ENCODE measurements at regions of chr3 and their contacts with region 1.

Region 1: DNA sequence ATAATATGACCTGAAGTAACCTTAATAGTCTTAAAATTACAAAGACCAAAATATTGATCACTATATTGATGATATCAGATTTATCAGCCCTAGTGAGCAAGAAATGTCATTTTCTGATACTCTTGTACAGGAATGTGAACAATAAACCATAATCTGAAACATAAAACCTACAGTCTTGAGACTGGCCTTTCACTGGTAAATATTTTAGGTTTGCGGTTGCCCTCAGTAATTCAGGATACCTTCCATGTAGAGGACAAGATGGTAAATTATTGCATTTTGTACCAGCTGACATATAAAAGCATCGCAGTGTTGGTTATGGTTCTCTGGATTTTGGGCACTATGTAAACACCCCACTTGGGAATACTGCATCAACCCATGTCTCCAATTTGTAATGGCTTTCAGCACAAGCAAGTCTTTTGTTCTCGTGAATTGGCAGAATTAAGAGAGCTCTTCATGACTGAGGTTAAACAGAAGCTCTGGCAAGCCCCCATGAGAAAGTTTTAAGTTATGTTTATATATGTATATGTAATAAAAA is 128.5 kb downstream of the LMLN start:
- DNase-seq: no peak
- H3K4me3 ChIP-seq: no peak overlapping the region
- H3K27ac ChIP-seq: no peak overlapping the region
- H3K4me1 ChIP-seq: peaks cover 3% of the 10 kb centered on the region
- H3K27me3 ChIP-seq: no peaks in the 10 kb centered on the region
- CTCF ChIP-seq: no peak

Region 2: DNA sequence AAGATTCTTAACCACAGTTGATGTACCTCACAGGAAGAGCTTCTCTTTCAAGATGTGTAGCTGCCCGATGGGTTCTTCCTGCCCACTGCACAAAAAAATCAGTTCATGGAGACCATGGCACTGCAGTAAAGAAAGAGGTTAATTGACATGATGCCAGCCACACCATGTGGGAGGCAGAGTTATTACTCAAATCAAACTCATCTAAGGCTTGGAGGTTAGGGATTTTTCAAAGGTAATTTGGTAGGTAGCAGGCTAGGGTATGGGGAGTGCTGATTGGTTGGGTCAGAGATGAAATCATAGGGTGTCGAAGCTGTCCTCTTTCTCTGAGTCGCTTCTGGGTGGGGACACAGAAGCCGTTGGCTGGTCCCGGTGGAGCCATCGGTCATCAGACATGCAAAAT is 475.3 kb before region 1 on chr3:
- CTCF ChIA-PET with region 1: no interaction called
- POLR2A ChIA-PET with region 1: no interaction called
- intact Hi-C with region 1: no loop called
- DNase-seq: no peak
- H3K4me3 ChIP-seq: no peak overlapping the region
- H3K27ac ChIP-seq: no peak overlapping the region
- H3K4me1 ChIP-seq: no peaks in the 10 kb centered on the region
- H3K27me3 ChIP-seq: no peaks in the 10 kb centered on the region
- CTCF ChIP-seq: no peak

Region 3: GRCh38 chr3:197936819-197937384 is 151.6 kb before region 1 on chr3:
- CTCF ChIA-PET with region 1: no interaction called
- POLR2A ChIA-PET with region 1: no interaction called
- intact Hi-C with region 1: no loop called
- DNase-seq: no peak
- H3K4me3 ChIP-seq: no peak overlapping the region
- H3K27ac ChIP-seq: no peak overlapping the region
- H3K4me1 ChIP-seq: peaks cover 3% of the 10 kb centered on the region
- H3K27me3 ChIP-seq: no peaks in the 10 kb centered on the region
- CTCF ChIP-seq: no peak

Region 4: GRCh38 chr3:197997936-197998335 is 90.6 kb before region 1 on chr3:
- CTCF ChIA-PET with region 1: interaction called, 10 read pairs
- POLR2A ChIA-PET with region 1: no interaction called
- intact Hi-C with region 1: no loop called
- DNase-seq: no peak
- H3K4me3 ChIP-seq: no peak overlapping the region
- H3K27ac ChIP-seq: no peak overlapping the region
- H3K4me1 ChIP-seq: no peaks in the 10 kb centered on the region
- H3K27me3 ChIP-seq: no peaks in the 10 kb centered on the region
- CTCF ChIP-seq: no peak

Measured in A673 (cell line).